ENCODE measurements at regions of chrX and their contacts with region 1.

Region 1: DNA sequence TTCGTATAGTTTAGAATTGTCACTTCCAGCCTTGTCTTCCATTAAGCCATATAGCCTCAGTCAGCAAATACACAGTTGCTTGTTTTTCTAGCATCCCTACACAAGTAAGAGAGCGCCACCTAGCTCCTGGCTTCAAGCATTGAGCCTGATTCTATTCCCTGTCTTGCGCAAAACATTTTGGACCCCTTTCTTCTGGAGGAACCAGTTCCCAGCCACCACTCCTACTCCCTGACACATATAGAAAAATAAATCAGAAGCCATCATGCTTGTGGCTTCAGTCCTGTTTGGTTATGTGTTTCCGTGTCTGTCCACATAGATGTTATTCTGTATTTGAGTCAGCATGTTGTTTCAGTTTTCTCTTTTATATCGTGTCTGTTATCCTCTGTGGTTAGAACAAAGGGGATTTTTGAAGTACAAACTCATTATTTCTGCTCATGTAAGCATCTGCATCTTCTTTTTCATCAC is 59.9 kb downstream of the GK start:
- DNase-seq: peak; percentile 70
- ATAC-seq: peak; percentile 78
- H3K4me3 ChIP-seq: no peak overlapping the region
- H3K27ac ChIP-seq: no peak overlapping the region
- H3K4me1 ChIP-seq: no peaks in the 10 kb centered on the region
- H3K27me3 ChIP-seq: no peaks in the 10 kb centered on the region
- CTCF ChIP-seq: peak; percentile 81

Region 2: DNA sequence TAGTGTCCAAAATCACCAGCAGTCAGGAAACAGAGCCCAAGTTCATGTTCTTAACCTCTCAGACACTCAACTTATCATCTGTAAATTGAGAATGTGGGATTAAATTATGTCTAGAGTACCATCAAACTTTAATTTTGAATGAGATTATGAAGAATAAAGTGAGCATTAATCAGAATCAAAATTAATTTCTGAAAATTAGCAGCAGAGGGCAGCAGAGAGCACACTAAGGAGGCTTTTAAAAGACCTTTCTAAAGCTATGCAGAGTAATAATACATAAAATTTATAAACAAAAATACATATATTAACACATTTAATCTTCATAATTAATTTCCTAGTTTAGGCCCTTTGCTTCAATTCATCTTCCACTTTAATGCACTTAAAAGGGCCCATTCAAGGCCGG is 142.6 kb before region 1 on chrX:
- CTCF ChIA-PET with region 1: no interaction called
- POLR2A ChIA-PET with region 1: no interaction called
- intact Hi-C with region 1: loop called (anchors 1 kb)
- DNase-seq: peak; percentile 58
- ATAC-seq: no peak
- H3K4me3 ChIP-seq: no peak overlapping the region
- H3K27ac ChIP-seq: no peak overlapping the region
- H3K4me1 ChIP-seq: peaks cover 13% of the 10 kb centered on the region
- H3K27me3 ChIP-seq: no peaks in the 10 kb centered on the region
- CTCF ChIP-seq: peak; percentile 46; the same call in 1 of the 2 replicates

Region 3: DNA sequence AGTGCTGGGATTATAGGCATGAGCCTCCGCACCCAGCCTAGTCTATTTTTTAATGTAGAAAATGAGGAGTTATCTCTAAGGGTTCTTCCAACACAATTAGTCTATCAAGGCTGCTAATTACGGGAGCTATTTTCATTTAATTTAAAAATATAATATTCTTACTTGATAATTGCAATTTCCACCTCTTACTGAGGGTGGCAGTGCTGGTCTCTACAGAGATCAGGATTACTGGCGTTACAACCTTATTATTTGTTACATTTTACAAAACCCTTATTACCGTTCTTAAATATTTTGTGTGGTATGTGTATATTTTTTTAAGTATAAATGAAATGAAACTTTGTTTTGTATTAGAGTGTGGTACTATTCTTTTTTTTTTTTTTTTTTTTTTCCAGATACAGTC is 77.5 kb before region 1 on chrX:
- CTCF ChIA-PET with region 1: interaction called, 5 read pairs
- POLR2A ChIA-PET with region 1: no interaction called
- intact Hi-C with region 1: loop called (anchors 1 kb)
- DNase-seq: peak; percentile 51
- ATAC-seq: no peak
- H3K4me3 ChIP-seq: no peak overlapping the region
- H3K27ac ChIP-seq: no peak overlapping the region
- H3K4me1 ChIP-seq: no peaks in the 10 kb centered on the region
- H3K27me3 ChIP-seq: no peaks in the 10 kb centered on the region
- CTCF ChIP-seq: peak; percentile 62